ENCODE measurements at regions of chr1 and their contacts with region 1.

Region 1: GRCh38 chr1:226626577-226626956 is 78.0 kb downstream of the STUM start:
- DNase-seq: peak; percentile 72
- H3K4me3 Mint-ChIP-seq: peak overlapping the region; percentile 54
- H3K27ac Mint-ChIP-seq: peak overlapping the region; percentile 84
- H3K4me1 Mint-ChIP-seq: peaks cover 24% of the 10 kb centered on the region
- H3K27me3 Mint-ChIP-seq: peaks cover 13% of the 10 kb centered on the region

Region 2: DNA sequence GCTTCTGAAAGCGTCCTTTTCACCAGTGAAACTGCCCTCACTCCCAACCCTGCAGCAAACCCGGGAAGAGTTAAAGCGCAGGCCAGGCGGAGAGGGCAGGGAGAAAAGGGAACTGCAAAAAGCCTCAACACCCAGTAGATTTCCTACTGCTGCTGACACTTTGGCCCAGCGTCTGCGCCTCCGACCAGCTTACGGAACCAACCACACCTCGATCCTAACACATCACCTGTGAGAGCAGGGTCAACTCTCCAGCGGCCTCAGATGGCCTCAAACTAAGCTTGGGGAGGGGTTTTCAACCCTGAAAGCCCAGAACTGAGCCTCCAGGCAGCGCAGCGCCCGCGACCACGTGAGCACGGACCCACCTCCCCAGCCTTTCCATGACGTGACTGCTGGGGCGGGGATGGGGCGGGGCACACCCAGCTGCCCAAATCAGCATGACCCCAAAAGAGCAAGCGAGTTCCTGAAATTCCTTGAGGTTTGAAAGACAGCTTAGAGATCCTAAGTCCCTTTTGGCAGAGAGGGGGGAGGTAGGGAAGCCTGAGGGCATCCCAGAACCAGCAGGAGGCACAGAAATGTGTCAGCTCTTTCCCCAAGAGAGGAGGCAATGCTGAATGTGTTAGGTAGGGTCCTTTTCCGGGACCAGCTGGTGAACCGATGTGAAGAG is 53.4 kb after region 1 on chr1:
- intact Hi-C with region 1: loop called (anchors 1 kb)
- DNase-seq: peak; percentile 65
- H3K4me3 Mint-ChIP-seq: peak overlapping the region; percentile 82
- H3K27ac Mint-ChIP-seq: peak overlapping the region; percentile 97
- H3K4me1 Mint-ChIP-seq: peaks cover 97% of the 10 kb centered on the region
- H3K27me3 Mint-ChIP-seq: no peaks in the 10 kb centered on the region

Region 3: GRCh38 chr1:226798427-226799411 is 172.2 kb after region 1 on chr1:
- intact Hi-C with region 1: loop called (anchors 1 kb)
- DNase-seq: peak; percentile 63
- H3K4me3 Mint-ChIP-seq: peak overlapping the region; percentile 68
- H3K27ac Mint-ChIP-seq: peak overlapping the region; percentile 88
- H3K4me1 Mint-ChIP-seq: peaks cover 26% of the 10 kb centered on the region
- H3K27me3 Mint-ChIP-seq: peaks cover 16% of the 10 kb centered on the region

Region 4: DNA sequence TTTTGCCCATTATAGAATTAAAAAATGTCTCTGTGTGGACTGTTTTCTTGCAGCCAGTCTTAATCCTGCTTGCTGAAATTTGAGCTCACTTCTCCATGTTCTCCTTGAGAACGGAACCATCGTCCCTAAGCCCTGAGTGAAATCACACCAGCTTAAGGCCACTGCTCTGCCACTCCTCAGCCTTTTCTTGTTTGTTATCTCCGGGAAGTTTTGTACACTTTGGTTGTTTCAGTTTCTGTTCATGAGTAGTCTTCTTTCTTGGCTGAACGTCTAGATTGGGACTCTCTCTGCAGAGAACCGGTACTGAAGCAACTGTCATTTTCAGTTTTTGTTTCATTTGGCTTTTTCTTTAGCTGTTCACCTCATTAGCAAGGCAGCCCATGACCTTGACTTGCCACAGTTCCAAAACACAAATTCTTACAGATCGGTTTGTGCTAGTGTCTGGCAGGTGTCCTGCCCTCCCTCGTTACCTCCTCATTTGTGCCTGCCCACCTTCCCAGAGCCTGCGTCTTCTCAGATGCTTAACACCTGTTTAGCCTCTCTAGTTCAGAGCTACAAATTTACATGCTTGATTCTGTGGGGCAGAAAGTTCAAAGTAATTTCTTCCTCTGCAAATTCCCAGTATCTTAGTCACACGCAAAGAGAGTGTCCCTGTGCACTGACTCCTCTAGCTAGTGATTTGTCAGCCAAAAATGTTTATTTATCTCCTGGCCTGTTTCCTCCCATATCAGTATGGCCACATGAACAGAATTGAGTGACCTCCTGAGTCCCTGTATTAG is 256.3 kb after region 1 on chr1:
- intact Hi-C with region 1: loop called (anchors 1 kb)
- DNase-seq: peak; percentile 40
- H3K4me3 Mint-ChIP-seq: peak overlapping the region; percentile 48
- H3K27ac Mint-ChIP-seq: peak overlapping the region; percentile 87
- H3K4me1 Mint-ChIP-seq: peaks cover 60% of the 10 kb centered on the region
- H3K27me3 Mint-ChIP-seq: no peaks in the 10 kb centered on the region

Region 5: GRCh38 chr1:227072991-227073390 is 446.4 kb after region 1 on chr1:
- intact Hi-C with region 1: loop called (anchors 1 kb)
- DNase-seq: no peak
- H3K4me3 Mint-ChIP-seq: no peak overlapping the region
- H3K27ac Mint-ChIP-seq: no peak overlapping the region
- H3K4me1 Mint-ChIP-seq: peaks cover 6% of the 10 kb centered on the region
- H3K27me3 Mint-ChIP-seq: peaks cover 9% of the 10 kb centered on the region

Region 6: GRCh38 chr1:227542143-227543120 is 915.9 kb after region 1 on chr1:
- intact Hi-C with region 1: loop called (anchors 5 kb)
- DNase-seq: peak; percentile 87
- H3K4me3 Mint-ChIP-seq: peak overlapping the region; percentile 56
- H3K27ac Mint-ChIP-seq: peak overlapping the region; percentile 55
- H3K4me1 Mint-ChIP-seq: no peaks in the 10 kb centered on the region
- H3K27me3 Mint-ChIP-seq: no peaks in the 10 kb centered on the region

Measured in activated T-helper 1 cell treated with anti-CD3 and anti-CD28 coated beads, Interleukin-12 subunit alpha, Interleukin-12 subunit beta, Interleukin-2, Interleukin-4 antibody, amounts not matched to agents 30 ng/mL and 10 ng/mL and 1 ng/mL, durations not matched to agents 14 hours and 24 hours and 36 hours (primary cell).